ENCODE measurements at regions of chr4 and their contacts with region 1.

Region 1: GRCh38 chr4:54746218-54746617 is 88.5 kb downstream of the KIT start:
- DNase-seq: no peak
- ATAC-seq: no peak
- H3K4me3 ChIP-seq: no peak overlapping the region
- H3K27ac ChIP-seq: no peak overlapping the region
- H3K4me1 ChIP-seq: no peaks in the 10 kb centered on the region
- H3K27me3 ChIP-seq: no peaks in the 10 kb centered on the region
- CTCF ChIP-seq: no peak

Region 2: DNA sequence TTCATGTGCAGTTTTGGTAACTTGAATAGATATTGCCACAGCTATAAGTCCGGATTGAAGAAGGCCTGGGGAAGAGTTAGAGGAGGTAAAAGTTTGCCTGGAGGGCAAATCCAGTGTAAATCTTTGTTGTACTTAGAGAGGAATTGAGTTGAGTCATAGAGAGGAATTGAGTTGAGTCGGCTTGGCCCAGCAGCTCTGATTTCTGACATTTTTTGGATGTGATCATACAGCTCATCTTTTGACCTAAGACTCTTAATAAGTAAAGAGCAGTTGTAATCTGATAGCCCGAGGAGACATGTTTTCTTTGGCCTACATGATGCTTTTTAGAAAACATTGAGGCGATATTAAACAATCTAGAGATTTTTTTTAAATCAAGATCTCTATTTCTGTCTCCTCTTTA is 84.5 kb before region 1 on chr4:
- CTCF ChIA-PET with region 1: no interaction called
- POLR2A ChIA-PET with region 1: interaction called, 10 read pairs
- in situ Hi-C with region 1: no loop called
- intact Hi-C with region 1: no loop called
- DNase-seq: no peak
- ATAC-seq: no peak
- H3K4me3 ChIP-seq: no peak overlapping the region
- H3K27ac ChIP-seq: no peak overlapping the region
- H3K4me1 ChIP-seq: no peaks in the 10 kb centered on the region; the same call in 1 of the 2 replicates
- H3K27me3 ChIP-seq: peaks cover 2% of the 10 kb centered on the region; the same call in 1 of the 2 replicates
- CTCF ChIP-seq: no peak

Measured in Panc1 (cell line).